Activated T-helper 2 cell treated with anti-CD3 and anti-CD28 coated beads, Interferon-gamma antibody, Interleukin-2, Interleukin-4, amounts not matched to agents 10 μg/mL and 5 μg/mL and 100 μg/mL, durations not matched to agents 14 hours and 24 hours and 36 hours (primary cell): ENCODE measurements at regions of chr2 and their contacts with region 1.

Region 1: DNA sequence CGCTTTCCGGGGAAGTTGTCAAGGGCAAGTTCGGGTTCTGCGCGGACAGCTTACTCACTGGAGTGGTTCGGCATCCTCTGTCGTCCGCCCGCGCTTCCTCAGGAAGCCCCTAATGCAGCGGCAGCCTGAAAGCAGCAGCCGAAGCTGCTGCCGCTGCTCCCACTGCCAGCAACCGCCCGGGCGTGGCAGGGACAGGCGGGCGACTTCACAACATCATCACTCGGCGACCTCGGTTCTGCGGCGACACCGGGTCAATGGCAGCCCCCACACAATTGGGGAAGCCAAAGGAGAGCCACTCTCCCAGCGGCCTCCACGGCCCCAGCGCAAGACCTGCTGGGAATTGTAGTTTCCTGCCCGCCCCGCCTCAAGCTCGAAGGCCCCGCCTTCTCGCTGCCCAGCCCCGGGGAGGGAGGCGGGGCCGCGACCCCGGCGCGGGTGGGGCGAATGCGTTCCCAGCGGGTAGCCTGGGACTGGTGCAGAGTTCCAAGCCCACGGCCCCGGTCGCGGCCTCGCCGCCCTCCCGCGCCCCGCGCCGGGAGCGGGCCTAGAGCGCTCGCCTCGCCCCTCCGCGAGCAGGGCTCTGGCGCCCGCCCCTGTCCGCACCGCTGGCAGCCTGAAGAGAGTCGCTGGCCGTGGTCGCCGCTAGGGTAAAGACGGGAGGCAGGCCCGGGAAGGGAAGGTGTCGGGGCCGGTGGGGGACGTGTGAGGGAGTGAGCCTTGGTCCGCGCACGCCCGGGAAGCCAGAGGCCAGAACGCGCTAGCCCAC is at the starts of genes STRADB and TRAK2:
- DNase-seq: peak; percentile 95
- H3K4me3 Mint-ChIP-seq: peak within 1 kb of the TSS; percentile 92
- H3K27ac Mint-ChIP-seq: peak within 1 kb of the TSS; percentile 91
- H3K4me1 Mint-ChIP-seq: peaks cover 46% of the 10 kb centered on the region
- H3K27me3 Mint-ChIP-seq: peaks cover 8% of the 10 kb centered on the region
- total RNA-seq, gene STRADB: 20.7 and 23.1 TPM in 2 replicates
- total RNA-seq, gene TRAK2: 27.1 and 27.7 TPM in 2 replicates

Region 2: GRCh38 chr2:201071479-201072200 is 379.8 kb before region 1 on chr2 and contains the starts of genes HYCC2 and NDUFB3:
- intact Hi-C with region 1: loop called (anchors 1 kb)
- DNase-seq: peak; percentile 92
- H3K4me3 Mint-ChIP-seq: peak within 1 kb of the TSS; percentile 93
- H3K27ac Mint-ChIP-seq: peak within 1 kb of the TSS; percentile 93
- H3K4me1 Mint-ChIP-seq: peaks cover 37% of the 10 kb centered on the region
- H3K27me3 Mint-ChIP-seq: no peaks in the 10 kb centered on the region
- total RNA-seq, gene HYCC2: 20.1 and 23.8 TPM in 2 replicates
- total RNA-seq, gene NDUFB3: 123 and 125 TPM in 2 replicates

Region 3: DNA sequence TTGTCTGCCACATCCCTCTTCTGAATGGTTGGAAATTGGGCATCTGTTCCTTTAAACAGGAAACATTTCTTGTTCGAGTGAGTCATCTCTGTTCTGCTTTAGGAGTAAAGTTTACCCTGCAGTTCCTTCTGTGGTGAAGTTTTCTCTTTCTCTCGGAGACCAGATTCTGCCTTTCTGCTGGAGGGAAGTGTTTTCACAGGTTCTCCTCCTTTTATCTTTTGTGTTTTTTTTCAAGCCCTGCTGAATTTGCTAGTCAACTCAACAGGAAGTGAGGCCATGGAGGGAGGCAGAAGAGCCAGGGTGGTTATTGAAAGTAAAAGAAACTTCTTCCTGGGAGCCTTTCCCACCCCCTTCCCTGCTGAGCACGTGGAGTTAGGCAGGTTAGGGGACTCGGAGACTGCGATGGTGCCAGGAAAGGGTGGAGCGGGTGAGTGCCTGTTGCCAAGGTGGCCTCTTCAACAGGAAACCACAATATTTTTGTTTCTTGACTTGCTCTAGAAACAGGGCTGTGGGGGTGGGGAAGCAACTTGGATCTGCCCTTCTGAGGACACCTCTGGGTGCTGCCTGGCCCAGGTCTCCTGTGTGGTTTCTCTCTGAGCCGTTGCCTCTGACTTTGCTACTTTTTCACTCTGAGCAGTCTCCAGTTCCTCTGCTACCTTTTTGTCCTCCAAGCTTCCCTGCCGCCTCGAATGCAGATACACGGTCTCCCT is 193.4 kb before region 1 on chr2:
- intact Hi-C with region 1: loop called (anchors 2 kb)
- DNase-seq: peak; percentile 94
- H3K4me3 Mint-ChIP-seq: peak overlapping the region; percentile 89
- H3K27ac Mint-ChIP-seq: peak overlapping the region; percentile 97
- H3K4me1 Mint-ChIP-seq: peaks cover 69% of the 10 kb centered on the region
- H3K27me3 Mint-ChIP-seq: no peaks in the 10 kb centered on the region

Region 4: DNA sequence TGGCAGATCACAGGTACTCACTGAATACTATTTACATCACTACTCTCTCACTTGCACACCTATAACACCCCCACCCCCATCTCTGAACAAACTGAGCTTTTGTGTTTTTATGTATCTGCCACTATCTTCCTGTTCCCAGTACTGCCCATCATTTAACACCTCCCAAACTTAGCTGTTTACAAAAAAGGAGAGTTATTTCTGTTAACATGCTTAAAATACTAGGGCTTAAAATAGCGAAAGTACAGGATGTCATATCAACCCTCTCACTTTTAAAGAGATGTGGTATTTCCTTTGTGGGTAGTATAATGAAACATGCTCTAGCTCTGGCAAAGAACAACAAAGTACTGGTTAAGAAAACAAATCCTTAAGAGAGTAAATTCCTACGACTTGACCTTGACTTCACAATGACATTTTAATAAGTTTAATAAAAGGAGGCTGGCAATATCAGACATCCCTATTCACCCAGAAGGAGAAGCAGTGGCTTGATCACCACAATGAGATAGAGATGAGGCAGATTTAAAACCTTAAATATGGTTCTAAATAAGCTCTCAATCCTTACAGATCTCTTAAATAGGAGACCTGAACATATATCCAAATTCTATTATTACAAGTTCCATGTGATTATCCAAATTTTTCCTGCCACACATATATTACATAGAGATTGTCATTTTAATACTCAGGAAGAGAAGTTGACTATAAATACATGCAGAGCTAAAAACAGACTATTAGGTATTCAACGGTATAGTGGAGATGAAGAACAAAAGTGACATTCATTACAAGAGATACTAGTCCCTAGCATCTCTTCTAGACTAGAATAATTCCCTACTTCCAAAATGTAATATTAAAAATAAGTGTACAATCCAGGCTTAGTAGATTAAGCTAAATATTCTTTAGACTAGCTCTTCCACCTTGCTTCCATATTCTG is 37.1 kb before region 1 on chr2:
- intact Hi-C with region 1: loop called (anchors 2 kb)
- DNase-seq: no peak
- H3K4me3 Mint-ChIP-seq: no peak overlapping the region
- H3K27ac Mint-ChIP-seq: no peak overlapping the region
- H3K4me1 Mint-ChIP-seq: peaks cover 13% of the 10 kb centered on the region
- H3K27me3 Mint-ChIP-seq: no peaks in the 10 kb centered on the region

Region 5: DNA sequence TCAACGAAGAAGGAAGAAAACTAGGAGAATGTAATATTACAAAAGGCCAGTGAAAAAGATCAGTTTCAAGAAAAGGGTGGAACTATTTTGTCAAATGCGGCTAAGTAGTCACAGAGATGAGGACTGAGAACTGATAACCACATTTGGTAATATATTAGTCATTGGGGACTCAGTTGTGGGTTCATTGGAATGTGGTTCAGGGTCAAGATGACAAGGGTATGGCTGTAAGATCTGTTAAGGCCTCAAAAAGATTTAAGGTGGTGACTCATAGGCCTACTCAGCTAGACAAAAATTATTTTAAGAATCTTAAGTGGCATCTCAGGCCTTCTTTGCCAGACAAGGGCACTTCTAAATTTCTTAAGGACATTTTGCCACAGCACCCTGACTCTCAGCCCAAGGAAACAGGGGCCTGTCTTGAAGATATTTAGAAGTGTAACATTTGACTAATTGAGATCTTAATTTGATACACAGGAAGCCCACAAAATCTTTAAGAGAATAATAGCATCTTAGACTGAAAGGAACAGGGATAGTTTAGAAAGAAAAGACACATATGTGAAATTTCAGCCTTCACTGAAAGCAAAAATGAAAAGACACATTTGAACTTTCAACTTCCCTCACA is 81.3 kb after region 1 on chr2:
- intact Hi-C with region 1: loop called (anchors 2 kb)
- DNase-seq: no peak
- H3K4me3 Mint-ChIP-seq: no peak overlapping the region
- H3K27ac Mint-ChIP-seq: peak overlapping the region; percentile 83
- H3K4me1 Mint-ChIP-seq: peaks cover 7% of the 10 kb centered on the region
- H3K27me3 Mint-ChIP-seq: peaks cover 2% of the 10 kb centered on the region

Region 6: GRCh38 chr2:201780674-201781581 is 329.5 kb after region 1 on chr2 and contains the start of gene ALS2:
- intact Hi-C with region 1: loop called (anchors 2 kb)
- DNase-seq: peak; percentile 90
- H3K4me3 Mint-ChIP-seq: peak within 1 kb of the TSS; percentile 97
- H3K27ac Mint-ChIP-seq: peak within 1 kb of the TSS; percentile 95
- H3K4me1 Mint-ChIP-seq: peaks cover 19% of the 10 kb centered on the region
- H3K27me3 Mint-ChIP-seq: peaks cover 11% of the 10 kb centered on the region
- total RNA-seq, gene ALS2: 11.3 and 14.3 TPM in 2 replicates